Activated T-helper 2 cell treated with anti-CD3 and anti-CD28 coated beads, Interferon-gamma antibody, Interleukin-2, Interleukin-4, amounts not matched to agents 10 μg/mL and 5 μg/mL and 100 μg/mL, durations not matched to agents 14 hours and 24 hours and 36 hours (primary cell): ENCODE measurements at regions of chr1 and their contacts with region 1.

Region 1: GRCh38 chr1:181424786-181425403 is 58.4 kb upstream of the CACNA1E start:
- DNase-seq: peak; percentile 66
- H3K4me3 Mint-ChIP-seq: peak overlapping the region; percentile 43
- H3K27ac Mint-ChIP-seq: no peak overlapping the region
- H3K4me1 Mint-ChIP-seq: peaks cover 7% of the 10 kb centered on the region
- H3K27me3 Mint-ChIP-seq: peaks cover 25% of the 10 kb centered on the region

Region 2: DNA sequence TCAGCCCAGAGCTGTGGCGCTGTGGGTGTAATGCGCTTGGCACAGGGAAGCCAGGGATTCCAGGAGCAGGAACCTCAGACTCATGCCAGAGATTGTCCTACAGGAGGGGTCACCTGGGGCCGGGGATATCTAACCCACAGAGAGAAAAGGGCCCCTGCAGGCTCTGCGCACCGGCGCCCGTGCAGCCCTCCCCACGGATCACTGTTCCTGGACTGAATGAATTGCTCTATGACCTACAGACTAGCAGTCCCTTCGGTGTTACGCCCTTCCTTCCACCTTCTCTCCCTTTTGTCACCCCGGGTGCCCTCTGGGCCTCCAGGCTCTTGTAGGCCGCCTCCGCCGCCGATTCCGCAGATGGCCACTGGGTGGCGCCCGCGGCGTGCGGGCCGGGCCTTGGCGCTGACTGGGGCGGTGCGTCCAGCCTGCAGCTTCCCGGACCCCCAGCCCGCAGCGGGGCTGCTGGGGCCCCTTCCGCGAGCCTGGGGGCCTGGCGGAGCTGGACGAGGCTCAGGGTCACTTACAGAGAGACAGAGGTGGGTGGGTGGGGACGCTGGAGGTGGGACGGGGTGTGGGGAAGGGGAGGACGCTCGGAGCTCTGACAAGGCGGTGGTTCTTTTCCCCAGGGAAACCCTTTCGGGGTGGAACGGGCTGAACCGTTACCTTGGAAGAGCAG is 235.1 kb before region 1 on chr1:
- intact Hi-C with region 1: loop called (anchors 1 kb)
- DNase-seq: peak; percentile 64
- H3K4me3 Mint-ChIP-seq: no peak overlapping the region
- H3K27ac Mint-ChIP-seq: no peak overlapping the region
- H3K4me1 Mint-ChIP-seq: peaks cover 1% of the 10 kb centered on the region
- H3K27me3 Mint-ChIP-seq: peaks cover 27% of the 10 kb centered on the region

Region 3: DNA sequence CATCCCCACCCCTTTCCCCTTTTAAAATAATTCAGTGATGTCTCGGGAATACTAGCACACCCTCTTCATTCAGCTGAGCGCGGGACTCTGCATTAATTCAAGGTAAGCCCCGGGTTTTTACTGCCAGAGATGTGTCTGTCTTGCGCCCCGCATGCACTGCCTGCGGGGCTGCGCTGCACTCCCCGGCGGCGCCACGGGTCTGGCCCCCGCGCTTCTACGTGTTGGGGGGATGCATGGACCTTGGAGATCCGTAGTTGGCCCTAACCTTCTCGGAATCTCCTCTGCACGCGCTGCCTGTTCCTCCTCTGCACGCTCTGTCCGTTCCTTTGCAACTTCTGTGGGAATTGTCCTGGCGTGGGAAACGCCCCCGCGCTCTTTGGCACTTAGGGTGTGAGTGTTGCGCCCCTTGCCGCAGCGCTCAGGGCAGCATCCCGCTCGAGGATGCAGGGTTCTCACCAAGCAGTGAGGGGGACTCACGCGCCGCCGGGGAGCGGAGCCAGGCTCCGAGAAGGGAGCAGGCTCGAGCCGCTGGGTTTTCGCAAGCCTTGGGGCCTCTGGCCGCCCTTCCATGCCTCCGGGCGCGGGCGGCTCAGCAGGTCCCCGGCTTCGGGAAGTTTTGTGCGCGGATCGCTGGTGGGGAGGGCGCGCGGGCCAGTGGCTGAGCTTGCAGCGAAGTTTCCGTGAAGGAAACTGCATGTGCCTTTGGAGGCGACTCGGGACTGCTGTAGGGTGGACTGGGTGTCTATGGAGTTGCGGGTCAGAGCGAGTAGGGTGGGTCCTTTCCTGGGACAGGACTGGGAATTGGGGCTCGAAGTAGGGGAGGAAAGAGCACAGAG is 106.7 kb before region 1 on chr1:
- intact Hi-C with region 1: loop called (anchors 5 kb)
- DNase-seq: no peak
- H3K4me3 Mint-ChIP-seq: no peak overlapping the region
- H3K27ac Mint-ChIP-seq: no peak overlapping the region
- H3K4me1 Mint-ChIP-seq: peaks cover 9% of the 10 kb centered on the region
- H3K27me3 Mint-ChIP-seq: peaks cover 70% of the 10 kb centered on the region